CD8-positive, alpha-beta T cell (primary cell): ENCODE measurements at regions of chr12 and their contacts with region 1.

Region 1: DNA sequence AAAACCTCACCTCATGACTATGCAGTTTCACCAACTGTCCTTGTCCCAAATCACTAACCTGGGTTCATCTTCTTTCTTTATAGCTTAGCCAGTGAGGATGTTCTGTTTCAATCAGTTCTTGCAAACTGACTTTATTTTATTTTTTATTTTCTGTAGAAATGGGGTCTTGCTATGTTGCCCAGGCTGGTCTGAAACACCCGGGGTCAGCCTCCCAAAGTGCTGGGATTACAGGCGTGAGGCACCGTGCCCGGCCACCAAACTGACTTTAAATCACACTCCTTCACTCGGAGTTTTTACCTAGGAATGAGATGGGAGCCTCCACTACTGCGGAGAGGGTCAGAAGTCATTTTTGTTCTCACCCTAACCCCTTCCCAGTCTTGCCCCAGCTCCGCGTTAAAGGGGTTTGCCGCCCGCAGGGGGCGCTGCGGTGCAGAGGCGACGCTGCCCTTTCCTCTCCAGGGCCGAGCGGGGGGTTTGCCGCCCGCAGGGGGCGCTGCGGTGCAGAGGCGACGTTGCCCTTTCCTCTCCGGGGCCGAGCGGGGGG is 7.0 kb upstream of the B4GALNT3 start:
- DNase-seq: peak in 7 of 9 experiments; percentile 17 to 72 (median 59)
- ATAC-seq: no peak
- H3K4me3 ChIP-seq: no peak overlapping the region
- H3K4me3 Mint-ChIP-seq: no peak overlapping the region
- H3K27ac ChIP-seq: no peak overlapping the region
- H3K27ac Mint-ChIP-seq: no peak overlapping the region
- H3K4me1 ChIP-seq: no peaks in the 10 kb centered on the region
- H3K4me1 Mint-ChIP-seq: peaks cover 2% of the 10 kb centered on the region
- H3K27me3 ChIP-seq: no peaks in the 10 kb centered on the region
- H3K27me3 Mint-ChIP-seq: peaks cover 15% of the 10 kb centered on the region
- CTCF ChIP-seq: no peak

Region 2: GRCh38 chr12:366820-367219 is 85.9 kb before region 1 on chr12:
- CTCF ChIA-PET with region 1: no interaction called
- POLR2A ChIA-PET with region 1: no interaction called
- intact Hi-C with region 1: no loop called
- DNase-seq: no peak
- ATAC-seq: no peak
- H3K4me3 ChIP-seq: no peak overlapping the region
- H3K4me3 Mint-ChIP-seq: no peak overlapping the region
- H3K27ac ChIP-seq: no peak overlapping the region
- H3K27ac Mint-ChIP-seq: no peak overlapping the region
- H3K4me1 ChIP-seq: no peaks in the 10 kb centered on the region
- H3K4me1 Mint-ChIP-seq: peaks cover 19% of the 10 kb centered on the region
- H3K27me3 ChIP-seq: no peaks in the 10 kb centered on the region
- H3K27me3 Mint-ChIP-seq: no peaks in the 10 kb centered on the region
- CTCF ChIP-seq: no peak

Region 3: GRCh38 chr12:401235-402028 is 51.3 kb before region 1 on chr12 and contains the start of gene CCDC77:
- CTCF ChIA-PET with region 1: no interaction called
- POLR2A ChIA-PET with region 1: no interaction called
- intact Hi-C with region 1: no loop called
- DNase-seq: peak; percentile 87 to 96 (median 92)
- ATAC-seq: peak; percentile 100
- H3K4me3 ChIP-seq: peak within 1 kb of the TSS; percentile 81 to 96
- H3K4me3 Mint-ChIP-seq: no peak within 1 kb of the TSS
- H3K27ac ChIP-seq: peak within 1 kb of the TSS; percentile 43 to 69
- H3K27ac Mint-ChIP-seq: no peak within 1 kb of the TSS
- H3K4me1 ChIP-seq: peaks cover 10% of the 10 kb centered on the region
- H3K4me1 Mint-ChIP-seq: no peaks in the 10 kb centered on the region
- H3K27me3 ChIP-seq: no peaks in the 10 kb centered on the region
- H3K27me3 Mint-ChIP-seq: no peaks in the 10 kb centered on the region
- CTCF ChIP-seq: peak; percentile 40
- total RNA-seq, gene CCDC77: 2.8 to 5.2 TPM

Region 4: GRCh38 chr12:422526-422925 is 30.2 kb before region 1 on chr12:
- CTCF ChIA-PET with region 1: no interaction called
- POLR2A ChIA-PET with region 1: no interaction called
- intact Hi-C with region 1: no loop called
- DNase-seq: no peak
- ATAC-seq: no peak
- H3K4me3 ChIP-seq: no peak overlapping the region
- H3K4me3 Mint-ChIP-seq: no peak overlapping the region
- H3K27ac ChIP-seq: no peak overlapping the region
- H3K27ac Mint-ChIP-seq: no peak overlapping the region
- H3K4me1 ChIP-seq: no peaks in the 10 kb centered on the region
- H3K4me1 Mint-ChIP-seq: no peaks in the 10 kb centered on the region
- H3K27me3 ChIP-seq: no peaks in the 10 kb centered on the region
- H3K27me3 Mint-ChIP-seq: no peaks in the 10 kb centered on the region
- CTCF ChIP-seq: no peak

Region 5: DNA sequence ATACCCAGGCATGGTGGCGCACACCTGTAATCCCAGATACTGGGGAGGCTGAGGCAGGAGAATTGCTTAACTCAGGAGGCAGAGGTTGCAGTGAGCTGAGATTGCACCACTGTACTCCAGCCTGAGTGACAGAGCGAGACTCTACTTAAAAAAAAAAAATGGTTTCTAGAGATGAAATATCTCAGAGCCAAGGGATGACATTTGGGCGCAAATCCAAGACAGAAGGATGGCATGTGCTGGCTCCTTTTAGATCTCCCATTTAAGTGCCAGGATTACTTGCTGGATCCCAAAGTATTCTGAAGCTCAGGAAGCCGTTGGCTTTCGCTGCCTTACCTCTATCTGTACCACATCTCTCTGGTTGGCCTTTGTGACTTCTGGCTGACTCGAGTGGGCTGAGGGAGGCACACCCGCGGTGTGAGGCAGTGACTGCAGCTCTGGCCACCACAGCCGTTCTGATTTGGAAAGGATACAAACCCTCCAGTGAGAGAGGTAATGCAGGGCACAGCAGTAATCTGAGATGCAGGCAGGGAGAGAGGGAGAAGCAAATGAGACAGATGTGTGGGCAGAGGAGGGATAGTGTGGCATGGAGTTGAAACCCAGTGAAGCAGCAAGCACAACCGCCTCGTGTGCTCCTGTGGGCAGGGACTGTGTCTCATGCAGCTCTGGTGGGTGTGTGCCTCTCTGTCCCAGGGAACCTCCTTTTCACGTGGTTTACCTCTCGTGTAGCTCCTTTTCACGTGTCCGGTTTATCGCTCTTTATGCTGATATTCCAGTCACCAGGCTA is 11.9 kb after region 1 on chr12:
- CTCF ChIA-PET with region 1: interaction called, 13 read pairs
- POLR2A ChIA-PET with region 1: no interaction called
- intact Hi-C with region 1: no loop called
- DNase-seq: no peak
- ATAC-seq: no peak
- H3K4me3 ChIP-seq: no peak overlapping the region
- H3K4me3 Mint-ChIP-seq: no peak overlapping the region
- H3K27ac ChIP-seq: no peak overlapping the region
- H3K27ac Mint-ChIP-seq: no peak overlapping the region
- H3K4me1 ChIP-seq: no peaks in the 10 kb centered on the region
- H3K4me1 Mint-ChIP-seq: peaks cover 18% of the 10 kb centered on the region
- H3K27me3 ChIP-seq: no peaks in the 10 kb centered on the region
- H3K27me3 Mint-ChIP-seq: peaks cover 15% of the 10 kb centered on the region
- CTCF ChIP-seq: no peak

Region 6: DNA sequence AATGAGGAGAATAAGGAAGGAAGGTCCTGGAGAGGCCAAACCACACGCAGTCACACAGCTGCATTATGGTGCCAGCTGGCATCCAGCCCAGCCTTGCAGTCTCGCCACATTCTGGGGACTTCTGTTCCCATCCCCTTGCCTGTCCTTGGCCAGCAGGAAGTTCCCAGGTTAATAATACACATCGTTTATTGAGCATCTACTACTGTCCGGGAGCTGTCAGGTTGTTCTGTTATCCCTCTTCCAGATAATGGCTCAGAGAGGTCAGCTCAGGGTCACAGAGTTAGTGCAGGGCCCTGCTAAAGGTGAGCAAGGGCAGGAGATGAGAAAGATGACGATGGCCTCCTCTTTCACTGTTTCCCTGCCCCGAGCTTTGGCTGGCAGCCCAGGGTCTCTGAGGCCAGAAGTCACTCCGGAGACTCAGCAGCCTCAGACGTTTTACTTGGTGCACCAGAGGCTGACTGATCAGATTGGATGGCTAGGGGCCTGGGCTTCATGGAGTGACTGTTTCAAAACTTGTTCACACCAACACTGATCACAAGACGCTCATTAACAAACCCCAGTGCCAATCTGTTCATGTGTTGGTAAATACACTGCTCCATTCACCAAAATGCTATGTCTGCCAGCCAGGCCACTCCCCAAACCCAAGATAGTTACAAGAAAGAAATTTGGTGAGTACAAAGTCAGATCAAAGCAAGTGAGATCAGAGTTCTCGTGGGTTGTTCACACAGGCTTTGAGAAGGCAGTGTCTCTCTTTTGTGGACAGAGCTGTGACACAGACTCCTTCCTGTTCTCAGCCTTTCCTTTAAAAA is 86.2 kb after region 1 on chr12:
- CTCF ChIA-PET with region 1: interaction called, 20 read pairs
- POLR2A ChIA-PET with region 1: no interaction called
- intact Hi-C with region 1: no loop called
- DNase-seq: peak in 7 of 9 experiments; percentile 29 to 92 (median 56)
- ATAC-seq: peak; percentile 96
- H3K4me3 ChIP-seq: peak overlapping the region in 1 of 2 experiments; percentile 15
- H3K4me3 Mint-ChIP-seq: peak overlapping the region; percentile 42
- H3K27ac ChIP-seq: peak overlapping the region in 1 of 2 experiments; percentile 75
- H3K27ac Mint-ChIP-seq: peak overlapping the region; percentile 33
- H3K4me1 ChIP-seq: peaks cover 33% of the 10 kb centered on the region
- H3K4me1 Mint-ChIP-seq: peaks cover 23% of the 10 kb centered on the region
- H3K27me3 ChIP-seq: no peaks in the 10 kb centered on the region
- H3K27me3 Mint-ChIP-seq: peaks cover 6% of the 10 kb centered on the region
- CTCF ChIP-seq: no peak